ENCODE measurements at regions of chr12 and their contacts with region 1.

Region 1: GRCh38 chr12:62603061-62603810 is 136.6 kb downstream of the MON2 start:
- DNase-seq: peak; percentile 91
- H3K4me3 ChIP-seq: peak overlapping the region; percentile 62 to 95 (median 86)
- H3K27ac ChIP-seq: peak overlapping the region; percentile 94 to 100 (median 100)
- H3K4me1 ChIP-seq: peaks cover 0 to 29% (median 21%) of the 10 kb centered on the region in 4 donors
- H3K27me3 ChIP-seq: no peaks in the 10 kb centered on the region
- CTCF ChIP-seq: peak in 3 of 4 experiments; percentile 19 to 41 (median 38)
- EP300 ChIP-seq: no peak
- POLR2A ChIP-seq: peak; percentile 35 to 66

Region 2: DNA sequence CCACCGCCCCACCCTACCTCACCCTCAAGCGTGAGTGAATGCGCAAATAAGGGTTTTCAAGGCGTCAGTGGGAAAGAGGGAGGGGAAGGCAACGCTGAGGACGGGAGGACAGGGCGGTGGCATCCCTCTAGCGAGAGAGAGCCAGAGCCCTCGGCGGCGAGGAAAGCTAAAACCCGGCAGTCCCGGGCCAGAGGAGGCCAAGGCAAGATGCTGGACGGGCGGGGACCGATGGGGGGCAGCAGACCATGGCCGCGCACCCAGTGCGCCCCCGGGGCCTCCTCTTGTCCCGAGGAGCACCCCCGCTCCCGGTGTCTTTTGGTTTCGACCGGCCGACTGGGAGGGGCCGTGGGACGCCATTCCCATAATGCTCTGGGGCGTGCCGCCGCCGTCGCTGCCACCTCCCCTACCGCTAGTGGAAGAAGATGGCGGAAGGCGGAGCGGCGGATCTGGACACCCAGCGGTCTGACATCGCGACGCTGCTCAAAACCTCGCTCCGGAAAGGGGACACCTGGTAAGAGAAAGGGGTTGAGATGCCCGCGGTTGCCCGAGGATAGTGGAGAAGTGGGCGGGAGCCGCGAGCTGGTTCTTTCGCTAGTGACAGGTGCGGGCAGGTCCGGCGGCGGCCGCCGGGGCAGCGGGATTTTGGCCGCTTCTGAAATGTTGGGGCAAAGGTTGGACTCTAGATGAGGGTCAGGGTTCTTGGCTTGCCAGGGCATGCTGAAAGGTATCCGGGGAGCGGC is 343.1 kb before region 1 on chr12 and contains the start of gene USP15:
- intact Hi-C with region 1: loop called (anchors 5 kb)
- DNase-seq: peak; percentile 98
- H3K4me3 ChIP-seq: peak within 1 kb of the TSS; percentile 72 to 93 (median 89)
- H3K27ac ChIP-seq: peak within 1 kb of the TSS; percentile 86 to 94 (median 90)
- H3K4me1 ChIP-seq: peaks cover 0 to 46% (median 33%) of the 10 kb centered on the region in 4 donors
- H3K27me3 ChIP-seq: no peaks in the 10 kb centered on the region
- CTCF ChIP-seq: peak; percentile 22 to 56 (median 51)
- EP300 ChIP-seq: peak in 1 of 4 donors; percentile 46
- POLR2A ChIP-seq: peak; percentile 25 to 44
- total RNA-seq, gene USP15: 63.7 to 78.4 (median 73.1) TPM

Region 3: DNA sequence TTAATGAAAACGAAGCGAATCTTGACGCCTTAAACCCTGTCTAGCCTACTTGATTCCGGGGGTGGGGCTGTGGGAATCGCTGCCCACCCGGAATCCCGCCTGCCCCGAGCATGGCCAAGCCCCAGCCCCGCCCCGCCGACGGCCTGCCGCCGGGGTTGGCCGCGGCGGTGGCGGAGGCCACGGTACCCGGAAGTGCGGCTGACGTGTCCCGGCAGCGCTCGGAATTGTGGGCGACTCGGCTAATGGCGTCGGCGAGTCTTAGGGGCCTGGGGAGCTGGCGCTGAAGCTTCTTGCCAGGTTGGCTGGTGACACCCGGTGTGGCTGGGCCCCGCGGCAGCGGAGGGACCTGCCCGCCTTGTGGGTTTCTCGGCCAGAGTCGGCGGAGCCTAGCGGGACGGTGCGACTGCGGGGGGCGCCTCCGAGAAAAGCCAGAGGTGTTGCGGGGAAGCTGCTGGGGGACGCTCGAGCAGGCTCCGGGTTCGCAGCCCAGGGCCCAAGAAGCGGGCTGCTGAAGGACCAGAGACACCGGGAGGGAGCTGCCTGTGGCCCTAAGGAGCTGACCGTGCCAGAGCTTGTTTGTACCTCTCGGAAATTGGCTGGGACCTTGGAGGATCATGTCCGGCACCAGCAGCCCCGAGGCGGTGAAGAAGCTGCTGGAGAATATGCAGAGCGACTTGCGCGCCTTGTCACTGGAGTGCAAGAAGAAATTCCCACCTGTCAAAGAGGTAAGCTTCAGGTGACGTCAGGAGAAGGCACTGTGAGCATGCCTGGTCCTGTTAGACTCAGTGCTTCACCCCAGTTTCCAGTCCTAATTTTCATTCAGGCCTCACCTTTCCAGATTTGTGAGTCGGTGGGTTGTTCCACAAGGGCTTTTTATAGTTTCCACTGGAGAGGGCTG is 136.4 kb before region 1 on chr12 and contains the start of gene MON2:
- intact Hi-C with region 1: loop called (anchors 2 kb)
- DNase-seq: peak; percentile 92
- H3K4me3 ChIP-seq: peak within 1 kb of the TSS; percentile 62 to 95 (median 91)
- H3K27ac ChIP-seq: peak within 1 kb of the TSS; percentile 84 to 94 (median 92)
- H3K4me1 ChIP-seq: peaks cover 0 to 32% (median 24%) of the 10 kb centered on the region in 4 donors
- H3K27me3 ChIP-seq: no peaks in the 10 kb centered on the region
- CTCF ChIP-seq: no peak
- EP300 ChIP-seq: no peak
- POLR2A ChIP-seq: peak in 1 of 2 donors; percentile 43
- total RNA-seq, gene MON2: 57.1 to 92.0 (median 68.2) TPM

Region 4: GRCh38 chr12:62631471-62632410 is 28.5 kb after region 1 on chr12:
- intact Hi-C with region 1: loop called (anchors 1 kb)
- DNase-seq: peak; percentile 81
- H3K4me3 ChIP-seq: peak overlapping the region; percentile 29 to 60 (median 56)
- H3K27ac ChIP-seq: peak overlapping the region; percentile 67 to 74 (median 70)
- H3K4me1 ChIP-seq: peaks cover 0 to 20% (median 12%) of the 10 kb centered on the region in 4 donors
- H3K27me3 ChIP-seq: no peaks in the 10 kb centered on the region
- CTCF ChIP-seq: peak in 1 of 4 experiments; percentile 24
- EP300 ChIP-seq: no peak
- POLR2A ChIP-seq: no peak

Region 5: GRCh38 chr12:62673028-62673815 is 70.0 kb after region 1 on chr12:
- intact Hi-C with region 1: no loop called
- DNase-seq: no peak
- H3K4me3 ChIP-seq: no peak overlapping the region
- H3K27ac ChIP-seq: no peak overlapping the region
- H3K4me1 ChIP-seq: no peaks in the 10 kb centered on the region
- H3K27me3 ChIP-seq: no peaks in the 10 kb centered on the region
- CTCF ChIP-seq: no peak
- EP300 ChIP-seq: no peak
- POLR2A ChIP-seq: no peak

Region 6: GRCh38 chr12:62711631-62712241 is 108.5 kb after region 1 on chr12:
- intact Hi-C with region 1: no loop called
- DNase-seq: no peak
- H3K4me3 ChIP-seq: no peak overlapping the region
- H3K27ac ChIP-seq: no peak overlapping the region
- H3K4me1 ChIP-seq: peaks cover 0 to 40% (median 19%) of the 10 kb centered on the region in 4 donors
- H3K27me3 ChIP-seq: no peaks in the 10 kb centered on the region
- CTCF ChIP-seq: no peak
- EP300 ChIP-seq: no peak
- POLR2A ChIP-seq: no peak

Region 7: GRCh38 chr12:62724947-62725447 is 121.8 kb after region 1 on chr12:
- intact Hi-C with region 1: loop called (anchors 5 kb)
- DNase-seq: no peak
- H3K4me3 ChIP-seq: no peak overlapping the region
- H3K27ac ChIP-seq: peak overlapping the region in 2 of 4 donors; percentile 4 to 46
- H3K4me1 ChIP-seq: peaks cover 0 to 18% (median 8%) of the 10 kb centered on the region in 4 donors
- H3K27me3 ChIP-seq: no peaks in the 10 kb centered on the region
- CTCF ChIP-seq: no peak
- EP300 ChIP-seq: no peak
- POLR2A ChIP-seq: no peak

Region 8: DNA sequence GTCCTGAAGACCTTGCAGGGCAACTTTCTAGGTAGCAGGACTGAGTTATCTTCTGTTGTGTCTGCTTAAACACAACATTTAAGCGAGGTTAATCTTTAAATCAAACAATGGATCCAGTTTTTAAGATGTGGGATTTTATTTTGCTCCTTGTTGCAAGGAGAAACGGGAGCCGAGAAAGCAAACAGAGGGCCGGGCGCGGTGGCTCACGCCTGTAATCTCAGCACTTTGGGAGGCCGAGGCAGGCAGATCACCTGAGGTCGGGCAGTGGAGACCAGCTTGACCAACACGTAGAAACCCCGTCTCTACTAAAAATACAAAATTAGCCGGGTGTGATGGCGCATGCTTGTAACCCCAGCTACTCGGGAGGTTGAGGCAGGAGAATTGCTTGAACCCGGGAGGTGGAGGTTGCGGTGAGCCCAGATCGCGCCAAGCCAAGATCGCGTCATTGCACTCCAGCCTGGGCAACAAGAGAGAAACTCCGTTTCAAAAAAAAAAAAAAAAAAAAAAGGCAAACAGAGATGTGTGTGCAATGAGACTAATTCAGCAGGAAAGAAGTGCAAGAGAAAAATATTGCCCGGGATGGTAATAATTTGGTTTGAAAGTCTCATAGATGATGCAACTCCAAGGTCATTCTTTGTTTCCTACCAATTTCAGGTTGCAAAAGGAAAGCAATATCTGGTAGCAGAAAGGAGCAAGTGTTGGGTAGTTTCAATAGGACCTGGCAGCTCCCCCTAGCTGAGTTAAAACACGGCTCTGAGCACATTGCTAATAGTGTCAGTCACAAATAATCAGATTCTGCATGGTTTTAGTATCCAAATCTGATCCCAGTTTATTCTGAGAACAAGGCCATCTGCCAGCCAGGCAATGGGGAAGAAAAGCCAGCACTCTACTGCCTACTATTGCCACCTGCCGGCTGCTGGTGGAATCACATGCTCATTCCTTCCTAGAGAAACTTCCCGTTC is 190.3 kb after region 1 on chr12:
- intact Hi-C with region 1: loop called (anchors 1 kb)
- DNase-seq: peak; percentile 90
- H3K4me3 ChIP-seq: no peak overlapping the region
- H3K27ac ChIP-seq: no peak overlapping the region
- H3K4me1 ChIP-seq: peaks cover 0 to 7% (median 0%) of the 10 kb centered on the region in 4 donors
- H3K27me3 ChIP-seq: no peaks in the 10 kb centered on the region
- CTCF ChIP-seq: peak; percentile 89 to 96 (median 94)
- EP300 ChIP-seq: no peak
- POLR2A ChIP-seq: no peak